ENCODE measurements at regions of chr7 and their contacts with region 1.

Region 1: GRCh38 chr7:39898867-39899266 is 51.2 kb upstream of the CDK13 start:
- DNase-seq: no peak
- H3K4me3 ChIP-seq: no peak overlapping the region
- H3K27ac ChIP-seq: no peak overlapping the region
- H3K4me1 ChIP-seq: no peaks in the 10 kb centered on the region
- CTCF ChIP-seq: no peak

Region 2: GRCh38 chr7:39880556-39880955 is 18.3 kb before region 1 on chr7:
- CTCF ChIA-PET with region 1: no interaction called
- POLR2A ChIA-PET with region 1: interaction called, 10 read pairs
- intact Hi-C with region 1: no loop called
- DNase-seq: no peak
- H3K4me3 ChIP-seq: no peak overlapping the region
- H3K27ac ChIP-seq: no peak overlapping the region
- H3K4me1 ChIP-seq: no peaks in the 10 kb centered on the region
- CTCF ChIP-seq: no peak

Region 3: DNA sequence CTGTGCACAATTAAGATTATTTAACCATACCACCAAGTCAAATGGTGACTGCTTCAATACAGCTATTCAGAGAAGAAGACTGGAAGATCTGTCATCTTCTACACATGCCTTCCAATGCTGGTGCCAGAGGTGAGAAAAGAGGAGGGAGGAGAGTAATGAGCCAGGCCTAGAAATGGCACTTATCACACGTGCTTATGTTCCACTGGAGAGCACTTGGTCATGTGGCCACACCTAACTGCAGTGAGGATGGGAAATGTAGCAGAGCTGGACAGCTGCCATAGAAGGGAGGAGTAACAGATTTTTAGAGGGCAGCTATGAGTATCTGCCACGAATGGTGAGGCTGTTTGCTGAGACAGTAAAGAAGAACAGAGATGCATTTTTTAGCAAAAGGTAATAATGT is 158.4 kb after region 1 on chr7:
- CTCF ChIA-PET with region 1: interaction called, 6 read pairs
- POLR2A ChIA-PET with region 1: interaction called, 3 read pairs
- intact Hi-C with region 1: loop called (anchors 1 kb)
- DNase-seq: no peak
- H3K4me3 ChIP-seq: no peak overlapping the region
- H3K27ac ChIP-seq: no peak overlapping the region
- H3K4me1 ChIP-seq: no peaks in the 10 kb centered on the region
- CTCF ChIP-seq: no peak

Region 4: DNA sequence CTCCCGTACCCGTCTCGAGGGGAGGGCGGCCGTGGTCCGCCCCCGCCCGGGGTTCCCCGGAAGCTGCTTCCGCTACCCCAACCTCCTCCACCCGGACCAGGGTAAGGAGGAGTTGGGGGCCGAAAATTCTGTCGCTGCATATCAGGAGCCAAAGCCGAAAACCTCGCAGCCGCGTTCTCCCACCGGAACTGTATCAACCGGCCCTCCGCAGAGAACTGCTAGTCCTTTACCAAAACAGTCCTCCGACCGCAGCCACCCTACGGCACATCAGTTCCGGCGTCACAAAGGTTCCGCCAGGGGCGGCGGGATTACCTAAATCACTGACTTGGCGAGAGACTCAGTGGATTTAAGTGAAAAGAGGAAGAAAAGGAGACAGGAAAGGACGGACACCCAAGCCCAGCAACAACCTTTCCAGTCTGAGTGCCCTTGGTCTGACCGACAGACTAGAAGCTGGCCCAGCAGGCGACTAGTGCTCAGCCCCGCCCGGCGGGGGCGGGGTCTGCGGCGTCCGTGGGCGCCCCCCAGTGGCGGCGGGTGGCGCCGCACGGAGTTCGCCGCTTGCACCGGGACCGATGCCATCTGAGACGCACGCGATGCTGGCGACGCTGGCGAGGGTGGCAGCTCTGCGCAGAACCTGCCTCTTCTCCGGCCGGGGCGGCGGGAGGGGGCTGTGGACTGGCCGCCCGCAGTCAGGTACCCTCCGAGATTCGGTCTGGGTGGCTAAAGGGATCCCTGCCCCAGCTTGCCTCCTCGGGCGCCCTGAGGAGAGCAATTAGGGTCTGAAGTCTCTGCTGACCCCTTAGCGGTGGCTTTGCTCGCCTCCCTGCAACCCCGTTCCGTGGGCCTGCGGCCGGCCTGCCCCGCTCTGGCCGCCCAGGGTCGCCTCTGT is 235.8 kb after region 1 on chr7 and contains the starts of genes MPLKIP and SUGCT:
- CTCF ChIA-PET with region 1: no interaction called
- POLR2A ChIA-PET with region 1: interaction called, 7 read pairs
- intact Hi-C with region 1: loop called (anchors 2 kb)
- DNase-seq: peak; percentile 91
- H3K4me3 ChIP-seq: peak within 1 kb of the TSS; percentile 100
- H3K27ac ChIP-seq: peak within 1 kb of the TSS; percentile 89
- H3K4me1 ChIP-seq: peaks cover 18% of the 10 kb centered on the region
- CTCF ChIP-seq: peak; percentile 91
- total RNA-seq, gene MPLKIP: 35.2 and 44.1 TPM in 2 replicates
- total RNA-seq, gene SUGCT: 1.7 TPM in 1 of 2 replicates, not detected in the other

Measured in OCI-LY7 (cell line).